PC-9 (cell line): ENCODE measurements at regions of chr14 and their contacts with region 1.

Region 1: DNA sequence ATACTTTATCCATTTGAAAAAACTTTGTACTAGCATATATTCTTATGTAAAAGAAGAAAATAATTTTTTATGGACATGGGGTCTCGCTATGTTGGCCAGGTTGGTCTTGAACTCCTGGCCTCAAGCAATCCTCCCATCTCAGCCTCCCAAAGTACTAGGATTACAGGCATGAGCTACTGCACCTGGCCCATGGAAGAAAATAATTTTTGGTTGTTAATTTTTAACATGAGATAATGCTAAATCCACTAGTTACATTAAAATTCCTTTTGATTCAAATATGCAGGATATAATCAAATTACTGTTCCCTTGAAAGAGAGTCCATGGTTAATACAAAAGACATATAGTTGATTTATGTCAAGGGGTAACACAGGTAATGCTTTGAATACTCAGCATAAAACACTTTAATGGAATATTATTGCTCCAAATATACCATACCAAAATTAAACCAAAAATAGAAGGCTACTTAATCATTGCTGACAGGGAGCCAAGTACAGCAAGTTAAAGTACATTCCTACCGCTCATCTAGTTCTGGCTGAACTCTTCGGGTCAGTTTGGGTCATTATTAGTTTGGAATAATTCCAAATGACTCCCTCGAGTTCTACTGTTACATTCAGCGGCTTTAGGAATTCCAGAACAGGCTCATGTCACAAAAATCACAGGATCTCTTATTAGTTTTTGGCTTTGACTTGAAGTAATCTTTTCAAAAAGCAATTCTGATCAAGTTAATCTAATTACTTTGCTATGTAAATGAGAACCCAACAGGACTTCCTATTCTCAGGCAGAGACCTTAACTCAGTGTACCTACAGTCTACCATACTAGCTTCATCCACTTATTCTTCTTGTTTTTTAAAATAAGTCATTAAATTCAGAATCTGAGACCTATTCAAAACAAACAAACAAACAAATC is 6.1 kb downstream of the SOS2 start:
- DNase-seq: peak in 1 of 2 experiments; percentile 45
- H3K4me3 ChIP-seq: no peak overlapping the region
- H3K27ac ChIP-seq: no peak overlapping the region; the same call in 1 of the 2 replicates
- H3K4me1 ChIP-seq: peaks cover 28% of the 10 kb centered on the region
- H3K27me3 ChIP-seq: no peaks in the 10 kb centered on the region
- CTCF ChIP-seq: no peak

Region 2: GRCh38 chr14:50139192-50139591 is 86.1 kb before region 1 on chr14:
- CTCF ChIA-PET with region 1: no interaction called
- POLR2A ChIA-PET with region 1: no interaction called
- intact Hi-C with region 1: no loop called
- DNase-seq: no peak
- H3K4me3 ChIP-seq: no peak overlapping the region
- H3K27ac ChIP-seq: no peak overlapping the region
- H3K4me1 ChIP-seq: no peaks in the 10 kb centered on the region
- H3K27me3 ChIP-seq: no peaks in the 10 kb centered on the region
- CTCF ChIP-seq: no peak

Region 3: DNA sequence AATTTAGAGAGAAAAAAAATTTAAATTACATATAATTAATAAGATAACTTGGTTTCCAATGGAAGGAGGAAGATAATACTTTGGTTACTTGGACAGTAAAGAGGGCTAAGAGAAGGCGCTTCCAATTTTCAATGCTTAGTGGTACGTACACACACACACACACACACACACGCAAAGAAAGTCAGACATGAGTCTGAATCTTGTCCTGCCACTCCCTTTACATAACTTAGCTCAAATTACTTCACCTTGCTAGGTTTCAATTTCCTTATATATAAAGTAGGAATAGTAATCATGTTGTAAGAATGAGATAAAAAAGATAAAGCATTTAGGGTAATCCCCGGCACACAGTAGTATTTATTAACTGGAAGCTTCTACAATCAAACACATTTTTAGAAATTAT is 69.2 kb before region 1 on chr14:
- CTCF ChIA-PET with region 1: interaction called, 11 read pairs
- POLR2A ChIA-PET with region 1: no interaction called
- intact Hi-C with region 1: no loop called
- DNase-seq: peak in 1 of 2 experiments; percentile 62
- H3K4me3 ChIP-seq: no peak overlapping the region
- H3K27ac ChIP-seq: no peak overlapping the region
- H3K4me1 ChIP-seq: 0 out of 2 replicates have a peak, but pooled peaks cover 8% of the 10 kb centered on the region
- H3K27me3 ChIP-seq: no peaks in the 10 kb centered on the region
- CTCF ChIP-seq: no peak